HCT116 (cell line): ENCODE measurements at regions of chr7 and their contacts with region 1.

Region 1: DNA sequence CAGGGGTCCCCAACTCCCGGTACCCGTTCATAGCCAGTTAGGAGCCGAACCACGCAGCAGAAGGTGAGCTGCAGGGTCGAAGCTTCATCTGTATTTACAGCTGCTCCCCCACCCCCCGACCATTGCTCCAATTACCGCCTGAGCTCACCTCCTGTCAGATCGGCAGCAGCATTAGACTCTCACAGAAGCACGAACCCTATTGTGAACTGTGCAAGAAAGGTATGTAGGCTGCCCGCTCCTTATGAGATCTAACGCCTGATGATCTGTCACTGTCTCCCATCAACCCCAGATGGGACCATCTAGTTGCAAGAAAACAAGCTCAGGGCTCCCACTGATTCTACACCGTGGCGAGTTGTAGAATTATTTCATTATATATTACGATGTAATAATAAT is 14.6 kb upstream of the AZGP1 start:
- DNase-seq: no peak
- ATAC-seq: peak; percentile 13
- H3K4me3 ChIP-seq: no peak overlapping the region
- H3K27ac ChIP-seq: no peak overlapping the region
- H3K4me1 ChIP-seq: peaks cover 0 to 5% of the 10 kb centered on the region in 2 experiments; a peak in 2 of 4 replicates
- H3K27me3 ChIP-seq: 0 out of 2 replicates have a peak, but pooled peaks cover 2% of the 10 kb centered on the region
- CTCF ChIP-seq: no peak
- POLR2A ChIP-seq: no peak
- RAD21 ChIP-seq: no peak

Region 2: DNA sequence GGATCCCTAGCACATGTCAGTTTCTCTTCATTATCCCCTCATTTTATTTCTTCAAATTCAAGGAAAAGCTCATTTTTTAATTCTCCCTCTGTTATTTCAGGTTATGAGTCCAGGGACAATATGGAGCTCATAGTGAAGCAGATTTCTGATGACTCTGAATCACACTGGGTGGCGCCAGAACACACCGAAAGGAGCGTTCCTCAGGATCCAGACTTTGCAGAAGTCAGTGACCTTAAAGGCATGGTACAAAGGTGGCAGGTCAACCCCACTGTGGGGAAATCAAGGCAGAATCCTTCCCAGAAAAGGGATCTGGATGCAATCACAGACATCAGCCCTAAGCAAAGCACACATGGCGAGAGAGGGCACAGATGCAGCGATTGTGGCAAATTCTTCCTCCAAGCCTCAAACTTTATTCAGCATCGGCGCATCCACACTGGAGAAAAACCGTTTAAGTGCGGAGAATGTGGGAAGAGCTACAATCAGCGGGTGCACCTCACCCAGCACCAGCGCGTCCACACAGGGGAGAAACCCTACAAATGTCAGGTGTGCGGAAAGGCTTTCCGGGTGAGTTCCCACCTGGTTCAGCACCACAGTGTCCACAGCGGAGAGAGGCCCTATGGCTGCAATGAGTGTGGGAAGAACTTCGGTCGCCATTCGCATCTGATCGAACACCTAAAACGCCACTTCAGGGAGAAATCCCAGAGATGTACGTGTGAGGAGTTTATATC is 464.6 kb before region 1 on chr7:
- CTCF ChIA-PET with region 1: interaction called, 11 read pairs
- POLR2A ChIA-PET with region 1: no interaction called
- RAD21 ChIA-PET with region 1: interaction called in 1 of 2 experiments, 4 read pairs
- intact Hi-C with region 1: loop called (anchors 5 kb)
- DNase-seq: peak; percentile 13
- ATAC-seq: peak; percentile 74
- H3K4me3 ChIP-seq: no peak overlapping the region
- H3K27ac ChIP-seq: no peak overlapping the region
- H3K4me1 ChIP-seq: no peaks in the 10 kb centered on the region
- H3K27me3 ChIP-seq: no peaks in the 10 kb centered on the region
- CTCF ChIP-seq: peak; percentile 36 to 64 (median 43); a peak in 4 of 6 replicates
- POLR2A ChIP-seq: no peak
- RAD21 ChIP-seq: peak; percentile 76

Region 3: GRCh38 chr7:99910976-99911375 is 79.5 kb before region 1 on chr7:
- CTCF ChIA-PET with region 1: interaction called, 15 read pairs
- POLR2A ChIA-PET with region 1: interaction called, 3 read pairs
- RAD21 ChIA-PET with region 1: interaction called, 3 read pairs
- intact Hi-C with region 1: loop called (anchors 1 kb)
- DNase-seq: no peak
- ATAC-seq: no peak
- H3K4me3 ChIP-seq: no peak overlapping the region
- H3K27ac ChIP-seq: no peak overlapping the region
- H3K4me1 ChIP-seq: no peaks in the 10 kb centered on the region
- H3K27me3 ChIP-seq: no peaks in the 10 kb centered on the region
- CTCF ChIP-seq: no peak
- POLR2A ChIP-seq: no peak
- RAD21 ChIP-seq: no peak

Region 4: GRCh38 chr7:99918959-99919813 is 71.3 kb before region 1 on chr7 and contains the start of gene TRIM4:
- CTCF ChIA-PET with region 1: interaction called, 15 read pairs
- POLR2A ChIA-PET with region 1: interaction called, 3 read pairs
- RAD21 ChIA-PET with region 1: interaction called in 1 of 2 experiments, 3 read pairs
- intact Hi-C with region 1: no loop called
- DNase-seq: peak; percentile 85
- ATAC-seq: peak; percentile 100
- H3K4me3 ChIP-seq: peak within 1 kb of the TSS; percentile 60 to 86
- H3K27ac ChIP-seq: peak within 1 kb of the TSS; percentile 90
- H3K4me1 ChIP-seq: peaks cover 9 to 16% of the 10 kb centered on the region in 2 experiments
- H3K27me3 ChIP-seq: no peaks in the 10 kb centered on the region
- CTCF ChIP-seq: no peak; a peak in 1 of 6 replicates
- POLR2A ChIP-seq: peak; percentile 37
- RAD21 ChIP-seq: 0 out of 2 replicates have a peak, but pooled peaks have one; percentile 15
- total RNA-seq, gene TRIM4: 25.1 TPM